Sigmoid colon (tissue), 7 donors: ENCODE measurements at regions of chr6 and their contacts with region 1.

Region 1: DNA sequence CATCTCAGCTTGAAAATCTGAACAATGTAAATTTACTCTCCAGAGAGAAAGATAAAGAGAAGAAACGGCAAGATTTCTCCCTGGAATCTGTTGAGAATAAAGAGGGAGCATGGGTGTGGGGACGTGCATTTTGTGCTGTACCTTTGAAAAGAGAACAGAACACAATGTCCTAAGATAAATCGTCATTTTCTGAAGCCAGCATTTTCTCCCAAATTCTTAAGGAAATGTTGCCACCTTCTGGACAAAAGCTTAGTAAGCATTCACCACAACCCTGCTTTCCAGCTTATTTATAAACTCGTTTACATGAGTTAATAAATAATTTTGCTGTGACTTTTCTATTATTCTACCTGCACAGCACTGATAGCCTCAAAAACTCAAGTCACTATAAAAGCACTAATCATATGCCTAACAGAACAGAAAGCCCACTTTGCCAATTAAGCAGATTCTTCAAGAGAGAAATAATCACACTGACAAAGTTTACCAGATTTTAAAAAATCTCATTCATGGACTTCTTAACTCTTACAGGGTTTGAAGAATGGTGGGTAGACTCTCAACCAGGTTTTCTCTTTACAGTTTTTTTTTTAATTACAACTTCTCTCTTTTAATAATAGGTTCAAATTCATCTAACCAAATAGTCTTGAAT is 155.8 kb downstream of the MBOAT1 start:
- DNase-seq: no peak
- H3K4me3 ChIP-seq: no peak overlapping the region
- H3K27ac ChIP-seq: no peak overlapping the region
- H3K4me1 ChIP-seq: peaks cover 0 to 9% (median 3%) of the 10 kb centered on the region in 4 donors
- H3K27me3 ChIP-seq: no peaks in the 10 kb centered on the region
- CTCF ChIP-seq: peak in 2 of 4 experiments; percentile 15 to 37
- EP300 ChIP-seq: peak in 1 of 4 donors; percentile 19
- POLR2A ChIP-seq: no peak

Region 2: GRCh38 chr6:18595774-18596530 is 1460.5 kb before region 1 on chr6:
- intact Hi-C with region 1: loop called (anchors 1 kb)
- DNase-seq: peak; percentile 75
- H3K4me3 ChIP-seq: no peak overlapping the region
- H3K27ac ChIP-seq: peak overlapping the region in 2 of 4 donors; percentile 32 to 41
- H3K4me1 ChIP-seq: peaks cover 0 to 5% (median 0%) of the 10 kb centered on the region in 4 donors
- H3K27me3 ChIP-seq: no peaks in the 10 kb centered on the region
- CTCF ChIP-seq: peak; percentile 46 to 88 (median 74)
- EP300 ChIP-seq: no peak
- POLR2A ChIP-seq: no peak

Region 3: GRCh38 chr6:18748314-18748713 is 1308.2 kb before region 1 on chr6:
- intact Hi-C with region 1: loop called (anchors 5 kb)
- DNase-seq: no peak
- H3K4me3 ChIP-seq: no peak overlapping the region
- H3K27ac ChIP-seq: no peak overlapping the region
- H3K4me1 ChIP-seq: peaks cover 0 to 6% (median 0%) of the 10 kb centered on the region in 4 donors
- H3K27me3 ChIP-seq: no peaks in the 10 kb centered on the region
- CTCF ChIP-seq: no peak
- EP300 ChIP-seq: no peak
- POLR2A ChIP-seq: no peak

Region 4: DNA sequence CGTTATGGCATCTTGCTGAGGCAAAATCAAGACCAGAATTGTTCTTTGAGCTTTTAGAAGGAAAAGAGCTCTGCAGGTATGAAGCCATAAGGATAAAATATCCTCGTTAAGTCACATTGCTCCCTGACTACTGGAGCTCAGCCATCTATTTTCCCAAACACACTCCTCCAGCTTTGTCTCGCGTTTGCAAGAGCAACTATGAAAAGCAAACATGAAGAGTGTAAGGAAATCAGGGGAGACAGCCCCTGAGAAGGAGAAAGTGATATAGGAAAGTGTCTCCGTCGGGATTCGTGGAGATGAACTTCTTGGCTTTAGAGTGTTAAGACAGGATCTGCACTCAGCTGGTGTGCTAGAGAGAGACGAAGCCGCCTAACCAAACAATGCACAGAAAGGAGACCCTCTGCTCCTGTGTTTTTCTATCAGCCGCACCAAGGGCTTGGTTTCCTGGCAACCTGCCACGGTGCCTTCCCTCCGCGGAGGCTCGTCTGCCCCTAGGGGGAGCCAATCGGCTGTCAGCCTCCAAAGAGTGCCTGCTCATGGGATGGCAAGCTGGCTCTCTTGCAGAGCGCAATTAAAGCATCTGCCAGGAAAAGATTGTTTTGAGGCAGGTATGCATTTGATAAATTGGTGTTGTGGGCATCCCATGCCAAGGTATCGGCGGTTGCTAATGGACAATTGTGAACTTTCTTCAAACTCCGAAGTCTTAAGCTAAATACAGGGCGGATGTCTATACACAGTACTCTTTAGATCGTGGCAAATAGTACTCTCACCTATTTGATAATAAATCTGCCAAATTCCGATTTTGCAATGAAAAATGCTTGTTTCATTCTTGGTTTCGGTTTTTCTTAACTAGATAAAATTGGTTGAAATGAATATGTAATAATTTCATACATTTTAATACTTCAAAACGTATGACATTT is 1066.2 kb before region 1 on chr6:
- intact Hi-C with region 1: loop called (anchors 10 kb)
- DNase-seq: peak; percentile 77
- H3K4me3 ChIP-seq: peak overlapping the region in 2 of 4 donors; percentile 10 to 20
- H3K27ac ChIP-seq: no peak overlapping the region
- H3K4me1 ChIP-seq: peaks cover 0 to 6% (median 3%) of the 10 kb centered on the region in 4 donors
- H3K27me3 ChIP-seq: no peaks in the 10 kb centered on the region
- CTCF ChIP-seq: peak in 2 of 4 experiments; percentile 24 to 54
- EP300 ChIP-seq: no peak
- POLR2A ChIP-seq: no peak

Region 5: GRCh38 chr6:19999319-20000191 is 56.9 kb before region 1 on chr6:
- intact Hi-C with region 1: no loop called
- DNase-seq: no peak
- H3K4me3 ChIP-seq: no peak overlapping the region
- H3K27ac ChIP-seq: no peak overlapping the region
- H3K4me1 ChIP-seq: no peaks in the 10 kb centered on the region
- H3K27me3 ChIP-seq: no peaks in the 10 kb centered on the region
- CTCF ChIP-seq: no peak
- EP300 ChIP-seq: no peak
- POLR2A ChIP-seq: no peak

Region 6: DNA sequence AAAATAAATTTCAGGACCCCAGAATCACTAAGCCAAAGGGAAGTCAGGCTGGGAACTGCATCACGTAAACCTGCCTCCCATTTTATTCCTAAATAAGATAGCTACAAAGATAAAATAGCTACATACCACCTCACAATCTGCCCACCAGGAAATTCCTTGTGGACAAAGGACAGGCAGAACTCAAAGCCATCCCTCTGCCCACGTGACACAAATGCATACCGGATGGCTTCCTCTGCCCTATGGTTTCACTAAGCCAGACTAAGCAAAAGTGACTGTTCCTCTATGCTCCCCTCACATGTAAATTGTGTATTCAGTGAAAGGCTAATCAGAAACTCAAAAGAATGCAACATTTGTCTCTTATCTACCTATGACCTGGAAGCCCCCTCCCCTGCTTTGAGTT is 140.8 kb after region 1 on chr6:
- intact Hi-C with region 1: no loop called
- DNase-seq: no peak
- H3K4me3 ChIP-seq: no peak overlapping the region
- H3K27ac ChIP-seq: peak overlapping the region in 2 of 4 donors; percentile 65 to 73
- H3K4me1 ChIP-seq: peaks cover 0 to 44% (median 39%) of the 10 kb centered on the region in 4 donors
- H3K27me3 ChIP-seq: no peaks in the 10 kb centered on the region
- CTCF ChIP-seq: no peak
- EP300 ChIP-seq: no peak
- POLR2A ChIP-seq: no peak